MCF 10A (cell line): ENCODE measurements at regions of chr15 and their contacts with region 1.

Region 1: GRCh38 chr15:89057504-89058133 is 30.6 kb upstream of the ABHD2 start:
- DNase-seq: peak; percentile 87
- H3K4me3 Mint-ChIP-seq: no peak overlapping the region
- H3K27ac Mint-ChIP-seq: no peak overlapping the region
- H3K4me1 Mint-ChIP-seq: no peaks in the 10 kb centered on the region
- H3K27me3 Mint-ChIP-seq: no peaks in the 10 kb centered on the region
- CTCF ChIP-seq: peak; percentile 99

Region 2: DNA sequence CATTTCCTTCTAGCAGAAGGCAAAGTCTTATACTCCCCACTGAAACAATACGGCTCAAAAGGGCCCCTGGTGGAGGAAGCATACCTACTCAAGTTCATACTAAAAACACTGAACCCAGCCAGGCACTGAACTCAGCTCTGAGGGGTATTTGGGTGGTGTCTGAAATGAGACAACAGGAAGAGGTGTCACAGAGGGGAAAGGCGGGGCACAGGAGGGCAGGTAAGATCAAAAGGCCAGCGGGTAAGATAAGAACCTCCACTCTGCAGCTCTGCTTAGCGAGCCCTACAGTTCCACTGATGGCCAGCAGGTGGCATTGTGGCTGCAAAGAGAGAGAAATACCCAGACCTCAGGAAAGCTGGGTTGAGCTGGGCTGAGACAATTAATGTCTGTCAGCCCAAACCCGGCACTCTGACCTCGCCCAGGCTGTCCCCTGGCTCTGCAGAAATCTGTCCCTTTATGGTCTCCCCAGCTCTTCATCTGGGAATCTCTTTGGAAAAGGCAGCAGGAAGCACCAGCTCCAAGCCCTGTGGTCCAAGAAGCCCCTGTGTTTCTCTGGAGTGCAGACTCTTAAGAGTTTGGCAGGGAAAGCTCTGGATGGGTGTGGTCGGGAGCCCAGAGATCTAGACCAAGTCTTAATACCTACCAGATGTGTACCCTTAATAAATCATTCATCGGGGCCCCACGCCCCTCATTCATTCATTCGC is 152.8 kb before region 1 on chr15:
- CTCF ChIA-PET with region 1: interaction called, 23 read pairs
- POLR2A ChIA-PET with region 1: no interaction called
- intact Hi-C with region 1: no loop called
- DNase-seq: peak; percentile 80
- H3K4me3 Mint-ChIP-seq: no peak overlapping the region
- H3K27ac Mint-ChIP-seq: no peak overlapping the region
- H3K4me1 Mint-ChIP-seq: peaks cover 20% of the 10 kb centered on the region
- H3K27me3 Mint-ChIP-seq: no peaks in the 10 kb centered on the region
- CTCF ChIP-seq: peak; percentile 95

Region 3: DNA sequence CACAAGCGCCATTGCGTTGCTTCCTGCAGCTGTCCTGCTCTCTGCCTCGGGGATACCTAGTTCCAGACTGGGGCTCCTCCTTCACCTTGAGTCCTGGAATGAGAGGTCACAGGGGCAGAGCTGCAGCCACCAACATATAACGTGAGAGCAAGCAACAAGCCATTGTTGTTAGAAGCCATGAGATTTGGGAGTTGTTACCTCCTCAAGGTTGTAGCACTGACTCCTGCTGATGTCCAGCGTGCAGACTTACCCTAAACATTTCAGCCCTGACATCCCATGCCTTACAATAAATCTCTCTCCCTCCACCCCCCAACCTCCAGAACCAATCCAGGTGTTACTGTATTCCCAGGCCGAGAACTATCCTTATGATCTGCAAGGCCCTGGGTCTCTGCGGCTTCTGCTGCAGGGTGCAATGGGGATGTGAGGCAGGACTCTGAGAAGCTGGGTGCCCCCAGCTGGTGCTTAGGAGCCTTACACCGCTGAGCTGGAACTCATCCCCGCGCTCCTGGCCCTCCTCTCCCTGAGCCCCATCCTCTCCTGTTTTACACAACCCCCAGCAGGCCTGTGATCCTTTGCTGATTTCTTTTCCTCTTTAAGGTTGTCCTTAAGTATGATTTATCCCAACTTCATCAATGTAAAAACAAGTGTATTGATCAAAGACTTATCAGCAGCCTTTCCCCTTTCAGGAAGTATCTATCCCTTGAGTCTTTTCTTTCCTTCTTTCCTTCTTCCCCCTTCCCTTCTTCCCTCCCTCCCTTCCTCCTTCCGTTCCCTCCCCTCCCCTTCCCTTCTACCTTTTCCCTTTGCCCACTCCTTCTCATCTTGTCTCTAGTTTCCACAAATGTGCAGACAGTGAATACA is 53.5 kb before region 1 on chr15:
- CTCF ChIA-PET with region 1: no interaction called
- POLR2A ChIA-PET with region 1: no interaction called
- intact Hi-C with region 1: no loop called
- DNase-seq: peak; percentile 27
- H3K4me3 Mint-ChIP-seq: no peak overlapping the region
- H3K27ac Mint-ChIP-seq: no peak overlapping the region
- H3K4me1 Mint-ChIP-seq: peaks cover 5% of the 10 kb centered on the region
- H3K27me3 Mint-ChIP-seq: peaks cover 12% of the 10 kb centered on the region
- CTCF ChIP-seq: peak; percentile 9

Region 4: DNA sequence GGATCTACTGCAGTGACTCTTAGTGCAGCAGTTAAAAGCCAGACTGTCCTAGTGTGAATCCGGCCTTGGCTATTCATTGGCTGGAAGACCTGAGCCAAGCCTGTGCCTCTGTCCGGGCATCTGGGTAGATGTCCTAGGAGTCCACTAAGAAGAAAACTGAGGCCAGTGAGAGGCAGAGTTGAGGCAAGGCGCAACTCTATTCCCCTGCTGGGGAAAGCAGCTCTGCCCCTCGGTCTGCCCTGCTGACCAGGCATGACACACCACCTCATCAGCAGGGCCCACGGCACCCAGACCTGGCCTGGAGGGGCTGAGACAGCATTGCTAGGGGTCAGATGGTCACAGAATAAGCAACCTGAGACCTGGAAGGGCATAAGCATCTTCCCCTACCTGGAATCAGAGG is 16.1 kb before region 1 on chr15:
- CTCF ChIA-PET with region 1: interaction called, 28 read pairs
- POLR2A ChIA-PET with region 1: no interaction called
- intact Hi-C with region 1: no loop called
- DNase-seq: no peak
- H3K4me3 Mint-ChIP-seq: no peak overlapping the region
- H3K27ac Mint-ChIP-seq: no peak overlapping the region
- H3K4me1 Mint-ChIP-seq: no peaks in the 10 kb centered on the region
- H3K27me3 Mint-ChIP-seq: peaks cover 25% of the 10 kb centered on the region
- CTCF ChIP-seq: no peak

Region 5: GRCh38 chr15:89101302-89102191 is 43.9 kb after region 1 on chr15:
- CTCF ChIA-PET with region 1: interaction called, 14 read pairs
- POLR2A ChIA-PET with region 1: no interaction called
- intact Hi-C with region 1: no loop called
- DNase-seq: peak; percentile 94
- H3K4me3 Mint-ChIP-seq: peak overlapping the region; percentile 23
- H3K27ac Mint-ChIP-seq: peak overlapping the region; percentile 98
- H3K4me1 Mint-ChIP-seq: peaks cover 48% of the 10 kb centered on the region
- H3K27me3 Mint-ChIP-seq: no peaks in the 10 kb centered on the region
- CTCF ChIP-seq: no peak

Region 6: DNA sequence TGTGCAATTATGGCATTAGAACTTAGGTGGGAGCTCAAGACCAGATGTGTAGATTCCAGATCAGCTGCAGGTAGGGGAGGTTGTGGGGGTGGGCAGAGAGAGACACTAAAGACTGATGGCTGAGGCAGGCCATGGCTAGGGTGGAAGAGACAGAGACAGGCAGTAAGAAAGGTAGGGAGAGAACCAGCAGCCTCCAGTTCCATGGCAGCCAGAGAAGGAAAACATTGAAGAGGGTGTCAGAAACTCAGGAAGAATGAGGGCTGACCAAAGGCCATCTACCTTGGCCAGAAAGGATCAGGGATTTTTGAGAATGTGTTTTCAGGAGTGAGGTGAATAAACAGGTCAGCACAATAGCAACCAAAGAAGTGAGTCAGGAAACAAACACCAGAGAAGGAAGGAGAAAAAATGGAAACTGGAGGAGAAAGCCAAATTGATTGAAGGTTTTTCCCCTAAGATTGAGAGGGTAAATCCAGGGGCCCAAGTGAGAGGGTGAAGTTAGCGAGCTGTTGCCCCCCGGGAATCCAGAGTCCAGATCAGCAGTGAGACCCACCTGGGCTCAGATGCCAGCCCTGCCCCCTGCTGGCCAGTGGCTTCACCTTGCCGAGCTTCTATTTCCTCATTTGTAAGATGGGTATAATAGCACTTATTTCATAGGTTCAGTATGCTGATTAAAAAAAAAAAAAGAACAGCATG is 71.7 kb after region 1 on chr15:
- CTCF ChIA-PET with region 1: interaction called, 136 read pairs
- POLR2A ChIA-PET with region 1: no interaction called
- intact Hi-C with region 1: loop called (anchors 1 kb)
- DNase-seq: peak; percentile 60
- H3K4me3 Mint-ChIP-seq: no peak overlapping the region
- H3K27ac Mint-ChIP-seq: no peak overlapping the region
- H3K4me1 Mint-ChIP-seq: peaks cover 5% of the 10 kb centered on the region
- H3K27me3 Mint-ChIP-seq: no peaks in the 10 kb centered on the region
- CTCF ChIP-seq: peak; percentile 65

Region 7: GRCh38 chr15:89157918-89158564 is 100.4 kb after region 1 on chr15:
- CTCF ChIA-PET with region 1: interaction called, 11 read pairs
- POLR2A ChIA-PET with region 1: no interaction called
- intact Hi-C with region 1: no loop called
- DNase-seq: no peak
- H3K4me3 Mint-ChIP-seq: no peak overlapping the region
- H3K27ac Mint-ChIP-seq: no peak overlapping the region
- H3K4me1 Mint-ChIP-seq: no peaks in the 10 kb centered on the region
- H3K27me3 Mint-ChIP-seq: no peaks in the 10 kb centered on the region
- CTCF ChIP-seq: no peak

Region 8: DNA sequence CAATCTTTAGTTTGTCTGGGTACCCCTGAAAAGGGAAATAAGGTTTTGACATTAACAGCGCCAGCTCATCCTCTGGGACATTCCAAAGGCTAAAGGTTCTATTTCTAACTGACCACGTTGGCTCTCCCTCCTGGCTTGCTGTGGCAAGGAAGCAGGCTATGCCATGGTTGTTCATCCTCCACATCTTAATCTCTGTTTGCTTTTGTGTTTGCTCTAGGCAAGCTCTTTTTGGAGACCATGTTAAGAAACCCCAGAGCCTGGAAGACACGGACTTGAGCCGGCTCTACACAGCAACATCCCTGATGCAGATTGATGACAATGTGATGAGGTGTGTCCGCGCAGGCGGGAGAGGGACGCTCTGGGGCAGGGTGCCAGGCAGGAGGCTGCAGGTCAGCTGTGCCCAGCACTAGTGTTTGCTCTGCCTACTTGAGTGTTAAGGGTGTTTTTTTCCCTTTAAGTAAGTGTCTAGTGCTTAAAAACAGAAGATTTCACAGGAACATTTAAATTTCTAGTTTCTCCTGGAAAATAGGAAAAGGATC is 130.4 kb after region 1 on chr15:
- CTCF ChIA-PET with region 1: interaction called, 452 read pairs
- POLR2A ChIA-PET with region 1: no interaction called
- intact Hi-C with region 1: no loop called
- DNase-seq: no peak
- H3K4me3 Mint-ChIP-seq: no peak overlapping the region
- H3K27ac Mint-ChIP-seq: no peak overlapping the region
- H3K4me1 Mint-ChIP-seq: no peaks in the 10 kb centered on the region
- H3K27me3 Mint-ChIP-seq: no peaks in the 10 kb centered on the region
- CTCF ChIP-seq: no peak